ENCODE measurements at regions of chr1 and their contacts with region 1.

Region 1: GRCh38 chr1:119613769-119614720 is 34.0 kb downstream of the ZNF697 start:
- DNase-seq: peak; percentile 92
- H3K4me3 ChIP-seq: no peak overlapping the region
- H3K27ac ChIP-seq: no peak overlapping the region
- H3K4me1 ChIP-seq: peaks cover 0 to 4% (median 0%) of the 10 kb centered on the region in 4 donors
- H3K27me3 ChIP-seq: no peaks in the 10 kb centered on the region
- CTCF ChIP-seq: peak; percentile 54 to 86 (median 80)
- EP300 ChIP-seq: no peak
- POLR2A ChIP-seq: no peak

Region 2: GRCh38 chr1:119662034-119662437 is 48.0 kb after region 1 on chr1:
- intact Hi-C with region 1: loop called (anchors 1 kb)
- DNase-seq: no peak
- H3K4me3 ChIP-seq: no peak overlapping the region
- H3K27ac ChIP-seq: no peak overlapping the region
- H3K4me1 ChIP-seq: peaks cover 0 to 6% (median 1%) of the 10 kb centered on the region in 4 donors
- H3K27me3 ChIP-seq: no peaks in the 10 kb centered on the region
- CTCF ChIP-seq: no peak
- EP300 ChIP-seq: no peak
- POLR2A ChIP-seq: no peak

Region 3: DNA sequence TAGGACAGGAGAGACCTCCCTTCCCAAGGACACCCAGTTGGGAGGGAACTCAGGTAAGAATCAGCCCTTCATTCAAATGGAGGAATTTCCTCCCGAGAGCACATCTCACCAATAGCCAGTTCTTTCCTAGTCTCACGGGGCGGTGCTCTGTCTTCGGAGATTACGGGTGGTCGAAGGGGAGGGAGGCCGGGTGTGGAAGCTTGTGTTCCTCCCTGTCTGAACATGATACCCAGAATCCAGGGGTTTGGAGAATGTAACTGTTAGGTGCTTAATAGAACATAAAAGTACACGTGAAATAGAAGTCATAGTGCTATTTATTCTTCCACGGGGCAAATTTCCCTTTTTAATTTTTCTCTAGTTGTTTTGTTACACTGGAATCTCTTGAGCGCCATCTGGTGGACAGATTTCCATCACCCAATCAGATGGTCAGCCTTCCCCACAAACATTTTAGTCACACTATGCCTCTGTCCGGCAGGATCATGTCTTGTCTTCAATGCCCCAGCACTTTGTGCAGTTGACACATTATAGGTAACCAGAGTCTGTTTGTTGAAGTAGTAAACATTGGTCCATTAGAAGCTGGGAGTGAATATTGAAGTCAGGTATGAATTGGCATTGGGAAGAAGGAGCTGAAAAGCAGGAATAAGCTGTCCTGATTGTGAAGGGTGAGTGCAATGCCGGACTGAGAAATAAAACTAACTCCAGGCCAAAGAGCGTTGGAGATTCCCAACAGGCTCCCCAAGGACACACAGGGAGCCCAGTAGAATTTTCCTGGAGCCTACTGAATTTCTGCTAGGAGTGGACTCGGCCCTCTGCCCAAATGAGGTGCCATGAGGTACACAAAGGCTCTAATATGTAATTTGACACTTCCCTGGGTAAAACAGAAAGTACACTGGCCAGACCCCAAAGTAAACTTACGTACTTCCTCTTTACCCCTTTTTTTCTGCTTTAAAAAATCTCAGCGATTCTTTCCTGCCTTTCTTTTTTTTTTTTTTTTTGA is 61.6 kb after region 1 on chr1:
- intact Hi-C with region 1: loop called (anchors 1 kb)
- DNase-seq: peak; percentile 90
- H3K4me3 ChIP-seq: peak overlapping the region; percentile 17 to 40 (median 36)
- H3K27ac ChIP-seq: peak overlapping the region in 3 of 4 donors; percentile 29 to 53 (median 49)
- H3K4me1 ChIP-seq: peaks cover 0 to 5% (median 0%) of the 10 kb centered on the region in 4 donors
- H3K27me3 ChIP-seq: no peaks in the 10 kb centered on the region
- CTCF ChIP-seq: peak; percentile 49 to 86 (median 65)
- EP300 ChIP-seq: no peak
- POLR2A ChIP-seq: no peak

Measured in sigmoid colon (tissue), 7 donors.